HEK293 (cell line): ENCODE measurements at regions of chr1 and their contacts with region 1.

Region 1: GRCh38 chr1:202315576-202316168 is 26.1 kb downstream of the UBE2T start:
- H3K4me3 ChIP-seq: no peak overlapping the region
- H3K27ac ChIP-seq: no peak overlapping the region
- H3K4me1 ChIP-seq: no peaks in the 10 kb centered on the region; the same call in 1 of the 2 replicates
- CTCF ChIP-seq: peak; percentile 79

Region 2: DNA sequence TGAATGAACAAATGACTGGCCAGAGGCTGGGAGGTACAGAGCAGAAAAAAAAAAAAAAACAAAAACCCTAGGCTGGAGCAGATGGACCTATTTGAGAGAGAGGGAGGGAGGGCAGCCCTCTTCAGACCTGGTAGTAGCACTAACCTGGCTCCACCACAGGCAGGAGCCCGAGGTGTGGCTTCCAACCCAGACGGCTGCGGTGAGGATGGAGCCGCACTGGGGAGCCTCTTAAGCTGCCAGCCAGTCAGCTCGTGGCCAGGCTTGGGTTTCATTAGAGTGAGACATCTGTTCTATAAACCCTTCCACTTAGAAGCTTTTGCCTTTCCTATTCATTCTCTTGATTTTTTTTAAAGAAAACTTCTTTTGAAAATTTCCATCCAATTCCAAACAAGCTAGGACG is 105.3 kb before region 1 on chr1:
- CTCF ChIA-PET with region 1: interaction called, 10 read pairs
- POLR2A ChIA-PET with region 1: no interaction called
- H3K4me3 ChIP-seq: no peak overlapping the region
- H3K27ac ChIP-seq: no peak overlapping the region
- H3K4me1 ChIP-seq: no peaks in the 10 kb centered on the region
- CTCF ChIP-seq: peak; percentile 40; the same call in 1 of the 2 replicates

Region 3: DNA sequence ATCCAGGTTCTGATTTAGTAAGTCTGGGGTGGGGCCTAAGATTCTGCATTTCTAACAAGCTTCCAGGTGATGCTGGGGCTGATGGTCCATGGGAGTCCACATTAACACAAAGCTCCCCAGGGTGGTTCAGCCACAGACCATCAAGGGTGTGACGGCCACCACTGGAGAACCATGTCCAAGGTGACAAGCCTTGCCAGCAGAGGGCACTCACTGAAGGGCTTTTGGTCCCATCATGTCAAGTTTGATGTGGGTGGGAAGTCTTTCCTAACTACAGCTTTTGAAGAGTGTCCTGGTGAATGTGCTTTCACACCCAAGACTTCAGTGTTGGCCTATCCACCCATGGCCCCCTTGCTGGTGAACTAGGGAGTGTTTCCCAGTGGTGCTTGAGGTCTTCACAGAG is 41.1 kb before region 1 on chr1:
- CTCF ChIA-PET with region 1: interaction called, 83 read pairs
- POLR2A ChIA-PET with region 1: interaction called, 8 read pairs
- H3K4me3 ChIP-seq: no peak overlapping the region
- H3K27ac ChIP-seq: no peak overlapping the region
- H3K4me1 ChIP-seq: no peaks in the 10 kb centered on the region
- CTCF ChIP-seq: peak; percentile 32; the same call in 1 of the 2 replicates

Region 4: DNA sequence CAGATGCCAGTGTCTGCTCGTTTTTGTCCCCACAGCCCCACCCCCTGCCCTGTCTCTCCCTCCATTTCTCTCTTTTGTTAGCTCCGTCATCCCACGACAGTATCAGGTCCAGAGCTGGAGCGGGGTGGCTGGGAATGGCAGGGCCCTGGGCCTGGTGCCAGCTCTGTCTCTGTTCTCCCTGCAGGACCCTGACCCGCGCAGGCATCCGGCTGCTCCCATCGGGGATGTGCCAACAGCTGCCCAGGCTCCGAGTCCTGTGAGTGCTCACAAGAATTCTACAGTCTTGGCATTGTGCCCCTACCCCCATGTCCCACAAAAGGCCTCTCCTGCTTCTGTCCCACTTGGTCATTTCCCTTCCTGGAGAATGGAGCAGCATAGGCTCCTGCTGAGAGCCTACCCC is 11.3 kb before region 1 on chr1:
- CTCF ChIA-PET with region 1: interaction called, 13 read pairs
- POLR2A ChIA-PET with region 1: no interaction called
- H3K4me3 ChIP-seq: no peak overlapping the region
- H3K27ac ChIP-seq: no peak overlapping the region
- H3K4me1 ChIP-seq: no peaks in the 10 kb centered on the region
- CTCF ChIP-seq: no peak